ENCODE measurements at regions of chr2 and their contacts with region 1.

Region 1: DNA sequence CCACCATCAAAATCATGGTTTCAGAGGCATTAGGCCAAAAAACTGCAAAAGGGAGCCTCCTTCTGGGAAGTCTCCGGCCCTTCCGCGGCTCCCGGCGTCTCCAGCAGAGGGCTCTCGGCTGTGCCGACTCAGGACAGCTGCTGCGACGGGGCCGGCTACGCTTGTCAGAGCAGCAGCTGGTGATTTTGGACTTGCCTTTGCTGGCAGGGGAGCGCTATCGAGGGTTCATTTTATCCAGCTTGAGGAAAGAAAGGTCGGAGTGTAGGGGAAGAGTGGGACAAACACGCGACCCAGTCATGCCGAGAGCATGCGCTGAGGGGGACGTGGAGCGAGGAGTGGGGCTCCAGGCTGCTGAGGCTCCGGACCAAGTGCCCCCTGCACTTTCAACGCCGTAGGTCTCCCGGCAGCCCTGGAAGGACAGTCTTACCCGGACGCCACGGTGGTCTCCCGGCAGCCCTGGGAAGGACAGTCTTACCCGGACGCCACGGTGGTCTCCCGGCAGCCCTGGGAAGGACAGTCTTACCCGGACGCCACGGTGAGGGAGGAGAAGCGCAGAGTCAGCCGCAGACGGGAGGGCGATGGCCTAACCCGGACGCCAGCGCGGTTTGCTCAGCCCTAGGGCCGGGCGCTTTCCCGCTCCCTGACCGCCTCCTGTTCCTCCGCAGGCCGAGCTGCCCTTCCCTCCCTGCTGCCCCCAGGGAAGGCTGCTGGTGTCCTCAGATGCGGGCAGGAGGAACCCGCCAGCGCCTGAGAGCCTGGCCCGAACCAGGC is 21.7 kb downstream of the DDX18 start:
- DNase-seq: peak; percentile 71 to 93 (median 82)
- ATAC-seq: peak; percentile 91 to 98 (median 98)
- H3K4me3 ChIP-seq: peak overlapping the region in 3 of 4 donors; percentile 21 to 53 (median 36)
- H3K27ac ChIP-seq: no peak overlapping the region
- H3K4me1 ChIP-seq: no peaks in the 10 kb centered on the region
- H3K27me3 ChIP-seq: no peaks in the 10 kb centered on the region
- CTCF ChIP-seq: peak; percentile 49 to 77 (median 60)

Region 2: DNA sequence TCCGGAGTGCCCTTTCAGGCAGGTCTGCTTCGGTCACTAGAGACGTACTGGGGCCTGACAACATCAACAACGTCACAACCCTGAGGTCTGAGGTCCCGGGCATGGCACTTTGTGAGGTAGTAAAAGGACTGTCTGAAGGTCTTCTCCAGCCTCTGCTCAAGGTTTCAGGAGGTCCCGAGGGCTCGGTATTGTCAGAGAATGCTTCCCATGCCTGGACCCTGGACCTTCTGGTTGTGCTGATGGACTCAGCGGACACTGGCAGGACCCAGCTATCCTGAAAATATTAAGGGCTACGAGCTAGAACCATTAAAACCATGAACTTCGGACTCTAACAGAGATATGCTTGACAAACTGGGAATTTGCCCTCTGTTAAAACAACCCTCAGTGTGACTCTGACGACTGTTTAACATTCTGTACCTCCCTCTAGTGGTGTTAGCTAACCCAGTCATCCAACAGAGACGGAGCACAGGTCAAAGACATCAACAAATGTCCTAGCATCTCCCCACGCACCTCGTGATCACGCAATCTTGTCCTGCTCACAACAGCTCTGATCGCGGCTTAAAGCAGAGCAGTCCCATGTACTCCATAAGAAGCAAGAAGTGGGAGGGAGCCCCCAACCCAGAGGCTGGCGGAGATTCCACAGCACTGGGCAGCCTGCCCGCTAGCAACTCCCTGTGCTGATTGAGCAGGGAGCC is 81.2 kb after region 1 on chr2:
- intact Hi-C with region 1: no loop called
- DNase-seq: no peak
- ATAC-seq: peak in 2 of 4 donors; percentile 50 to 69
- H3K4me3 ChIP-seq: no peak overlapping the region
- H3K27ac ChIP-seq: no peak overlapping the region
- H3K4me1 ChIP-seq: no peaks in the 10 kb centered on the region
- H3K27me3 ChIP-seq: no peaks in the 10 kb centered on the region
- CTCF ChIP-seq: no peak

Region 3: DNA sequence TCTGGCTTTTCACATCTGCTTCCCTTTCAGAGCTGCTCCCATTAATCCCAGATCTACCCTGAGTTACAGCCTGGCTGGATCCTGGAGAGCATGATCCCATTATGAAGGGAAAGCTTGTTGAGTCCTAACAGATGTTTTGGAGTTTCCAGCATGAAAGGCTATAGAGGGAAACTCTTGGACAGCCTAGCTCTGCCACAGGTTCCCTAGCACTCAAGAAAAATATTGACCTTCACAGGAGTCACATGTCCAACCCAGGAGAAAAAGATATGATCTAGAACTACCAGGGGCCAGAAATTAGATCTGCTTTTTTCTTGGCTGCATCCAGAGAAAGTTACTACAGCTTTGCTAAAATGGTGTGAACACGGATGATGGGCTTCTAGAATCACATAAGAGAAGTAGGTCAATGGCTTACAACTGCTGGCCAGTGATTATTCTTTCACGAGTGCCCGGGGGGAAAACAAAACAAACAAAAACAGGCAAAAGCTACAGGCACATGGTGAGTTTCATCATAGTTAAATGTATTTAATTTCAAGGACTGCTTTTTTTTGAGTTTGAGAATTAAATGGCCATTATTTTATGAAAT is 161.8 kb after region 1 on chr2:
- intact Hi-C with region 1: loop called in 2 of 3 experiments (anchors 10 kb)
- DNase-seq: peak in 1 of 6 donors; percentile 10
- ATAC-seq: peak; percentile 53 to 90 (median 76)
- H3K4me3 ChIP-seq: no peak overlapping the region
- H3K27ac ChIP-seq: no peak overlapping the region
- H3K4me1 ChIP-seq: peaks cover 0 to 3% (median 0%) of the 10 kb centered on the region in 3 donors
- H3K27me3 ChIP-seq: no peaks in the 10 kb centered on the region
- CTCF ChIP-seq: no peak

Region 4: DNA sequence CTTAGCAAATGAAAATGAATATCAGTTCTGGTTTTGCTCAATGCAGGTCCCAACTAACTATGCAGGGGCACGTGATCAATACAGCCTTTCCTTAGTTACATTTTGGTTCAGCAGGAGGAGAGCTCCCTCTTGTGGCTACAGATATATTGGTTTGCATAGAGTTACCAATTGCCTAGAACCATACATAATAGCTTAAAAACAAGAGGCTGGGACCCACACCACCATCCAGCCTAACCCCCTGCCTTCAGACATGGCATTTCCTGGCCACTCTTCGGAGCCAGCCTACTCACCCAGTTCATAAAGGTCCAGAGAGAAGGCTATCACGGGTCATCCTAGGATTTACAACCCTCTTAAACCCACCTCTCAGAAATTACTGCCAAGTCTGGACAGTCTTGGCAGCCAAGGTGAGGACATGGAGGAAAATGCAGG is 167.2 kb after region 1 on chr2:
- intact Hi-C with region 1: loop called in 2 of 3 experiments (anchors 10 kb)
- DNase-seq: peak in 3 of 6 donors; percentile 29 to 52 (median 31)
- ATAC-seq: peak; percentile 86 to 99 (median 98)
- H3K4me3 ChIP-seq: no peak overlapping the region
- H3K27ac ChIP-seq: no peak overlapping the region
- H3K4me1 ChIP-seq: peaks cover 0 to under 1% (median 0%) of the 10 kb centered on the region in 3 donors
- H3K27me3 ChIP-seq: no peaks in the 10 kb centered on the region
- CTCF ChIP-seq: peak; percentile 57 to 78 (median 70)

Region 5: DNA sequence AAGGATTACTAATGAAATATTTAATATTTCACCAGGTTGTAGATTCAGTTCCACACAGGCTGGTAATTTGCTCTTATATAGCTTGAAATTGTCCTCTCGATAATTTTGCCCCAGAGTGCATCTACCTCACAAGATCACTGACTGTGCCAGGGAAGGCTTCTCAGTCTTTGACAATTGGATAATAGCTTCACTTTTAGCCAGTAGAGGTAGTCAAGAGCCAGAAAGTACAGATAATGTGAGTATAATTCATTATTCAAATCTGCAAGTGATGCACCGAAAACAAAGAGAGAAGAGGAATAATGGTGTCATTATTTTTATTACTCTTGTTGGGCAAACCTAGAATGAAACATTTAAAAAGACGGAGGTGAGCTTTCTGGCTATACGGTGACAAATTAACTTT is 718.4 kb after region 1 on chr2:
- intact Hi-C with region 1: no loop called
- DNase-seq: no peak
- ATAC-seq: no peak
- H3K4me3 ChIP-seq: no peak overlapping the region
- H3K27ac ChIP-seq: no peak overlapping the region
- H3K4me1 ChIP-seq: no peaks in the 10 kb centered on the region
- H3K27me3 ChIP-seq: no peaks in the 10 kb centered on the region
- CTCF ChIP-seq: no peak

Measured in pancreas (tissue), 10 donors.